Calu3 (cell line): ENCODE measurements at regions of chr20 and their contacts with region 1.

Region 1: DNA sequence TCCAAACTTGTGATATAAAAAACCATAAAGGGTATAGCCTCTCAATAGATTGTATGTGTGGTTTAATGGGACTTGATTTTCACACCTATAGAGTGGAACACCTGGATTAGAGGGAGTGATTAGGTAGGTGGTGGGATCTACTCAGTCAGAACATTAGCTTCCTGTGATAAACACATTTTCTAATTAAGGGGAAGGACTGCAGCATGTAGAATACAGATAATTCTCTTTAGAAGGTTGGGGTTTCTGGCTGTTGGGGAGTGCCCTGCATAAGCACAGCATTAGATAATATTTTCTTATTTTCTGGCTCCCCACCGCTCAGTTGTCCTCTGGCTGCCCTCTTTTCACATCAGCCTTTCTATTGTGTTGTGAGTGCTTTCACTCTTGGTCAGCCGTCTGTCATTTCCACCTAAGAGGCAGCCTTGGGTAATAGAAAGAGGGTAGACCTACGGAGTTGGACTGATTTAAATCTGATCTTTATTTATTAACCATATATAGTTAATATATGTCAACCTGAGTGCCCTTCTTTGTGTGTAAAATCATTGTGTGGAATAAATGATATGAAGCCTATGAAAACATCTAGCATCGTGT is 8.0 kb downstream of the CSE1L start:
- DNase-seq: no peak
- H3K4me3 Mint-ChIP-seq: peak overlapping the region; percentile 9
- H3K27ac Mint-ChIP-seq: peak overlapping the region; percentile 2
- H3K4me1 Mint-ChIP-seq: peaks cover 30% of the 10 kb centered on the region
- H3K27me3 Mint-ChIP-seq: no peaks in the 10 kb centered on the region
- CTCF ChIP-seq: no peak

Region 2: DNA sequence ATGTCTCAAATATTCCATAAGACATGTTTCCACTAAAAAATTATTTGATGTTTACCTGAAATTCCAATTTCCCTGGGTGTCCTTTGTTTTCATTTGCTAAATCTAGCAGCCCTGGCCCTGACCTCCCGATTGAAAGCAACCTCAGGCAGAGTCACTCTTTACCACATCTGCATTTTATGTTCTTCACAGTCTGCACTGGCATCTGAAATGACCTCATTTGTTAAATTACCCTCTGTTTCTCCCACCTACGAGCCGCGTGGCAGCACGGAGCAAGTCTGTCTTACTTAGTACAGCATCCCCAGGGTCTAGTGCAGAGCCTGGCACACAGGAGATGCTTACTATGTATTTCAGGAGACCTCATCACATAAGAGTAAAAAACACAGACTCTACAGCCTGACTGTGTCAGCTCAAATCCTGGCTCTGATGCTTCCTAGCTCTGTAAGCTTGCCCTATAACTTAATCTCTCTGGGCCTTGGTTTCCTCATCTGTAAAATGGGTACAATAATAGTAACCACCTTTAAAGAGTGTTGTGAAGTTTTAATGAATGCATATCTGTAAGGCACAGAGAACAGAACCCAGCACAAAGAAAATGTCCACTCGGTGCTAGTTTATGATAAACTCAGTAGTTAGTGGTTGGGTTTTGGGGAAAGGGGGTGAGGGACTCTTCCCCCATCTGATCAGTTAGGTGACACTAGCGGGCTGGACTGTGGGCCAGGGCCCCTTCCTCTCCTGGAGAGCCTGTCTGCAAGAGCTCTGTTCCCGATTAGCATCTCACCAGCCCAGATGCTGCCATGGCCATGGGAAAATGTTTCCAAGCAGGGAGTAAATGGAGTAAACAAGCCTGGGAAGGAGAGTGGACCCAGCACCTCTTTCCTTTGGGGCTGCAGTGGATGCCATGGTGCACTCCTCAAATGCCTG is 314.5 kb before region 1 on chr20:
- CTCF ChIA-PET with region 1: interaction called, 10 read pairs
- intact Hi-C with region 1: no loop called
- DNase-seq: no peak
- H3K4me3 Mint-ChIP-seq: no peak overlapping the region
- H3K27ac Mint-ChIP-seq: no peak overlapping the region
- H3K4me1 Mint-ChIP-seq: no peaks in the 10 kb centered on the region
- H3K27me3 Mint-ChIP-seq: peaks cover 63% of the 10 kb centered on the region
- CTCF ChIP-seq: no peak

Region 3: GRCh38 chr20:49100972-49101371 is 46.8 kb after region 1 on chr20:
- CTCF ChIA-PET with region 1: no interaction called
- intact Hi-C with region 1: no loop called
- DNase-seq: no peak
- H3K4me3 Mint-ChIP-seq: no peak overlapping the region
- H3K27ac Mint-ChIP-seq: no peak overlapping the region
- H3K4me1 Mint-ChIP-seq: no peaks in the 10 kb centered on the region
- H3K27me3 Mint-ChIP-seq: no peaks in the 10 kb centered on the region
- CTCF ChIP-seq: no peak

Region 4: DNA sequence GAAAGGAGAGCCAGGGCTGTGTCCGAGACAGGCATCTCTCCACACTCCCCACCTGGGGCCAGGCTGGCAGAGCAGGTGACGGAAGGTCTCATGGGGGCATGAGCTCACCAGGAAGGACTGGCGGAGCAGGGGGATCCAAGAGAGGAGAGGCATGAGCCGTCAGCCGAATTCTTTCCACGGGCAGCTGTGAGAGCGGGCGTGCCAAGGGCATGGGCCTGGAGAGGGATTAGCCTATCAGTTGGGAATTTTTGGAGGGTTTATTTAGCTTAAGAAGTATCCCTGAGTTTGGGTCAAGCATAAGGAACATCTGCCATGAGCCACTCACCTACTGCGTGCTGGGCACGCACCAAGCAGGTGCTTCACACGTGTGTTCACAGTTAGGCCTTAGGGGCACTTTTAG is 283.9 kb after region 1 on chr20:
- CTCF ChIA-PET with region 1: no interaction called
- intact Hi-C with region 1: no loop called
- DNase-seq: no peak
- H3K4me3 Mint-ChIP-seq: no peak overlapping the region
- H3K27ac Mint-ChIP-seq: no peak overlapping the region
- H3K4me1 Mint-ChIP-seq: no peaks in the 10 kb centered on the region
- H3K27me3 Mint-ChIP-seq: peaks cover 62% of the 10 kb centered on the region
- CTCF ChIP-seq: no peak